K562 (cell line): ENCODE measurements at regions of chr7 and their contacts with region 1.

Region 1: GRCh38 chr7:131859147-131859821 is 302.9 kb upstream of the PODXL start:
- DNase-seq: peak; percentile 72 to 87 (median 84)
- ATAC-seq: peak; percentile 100
- H3K4me3 ChIP-seq: no peak overlapping the region
- H3K27ac ChIP-seq: no peak overlapping the region
- H3K4me1 ChIP-seq: no peaks in the 10 kb centered on the region
- H3K27me3 ChIP-seq: no peaks in the 10 kb centered on the region
- CTCF ChIP-seq: peak; percentile 83 to 95 (median 87)
- EP300 ChIP-seq: no peak
- POLR2A ChIP-seq: no peak
- RAD21 ChIP-seq: peak; percentile 51 to 74; a peak in 3 of 4 replicates

Region 2: DNA sequence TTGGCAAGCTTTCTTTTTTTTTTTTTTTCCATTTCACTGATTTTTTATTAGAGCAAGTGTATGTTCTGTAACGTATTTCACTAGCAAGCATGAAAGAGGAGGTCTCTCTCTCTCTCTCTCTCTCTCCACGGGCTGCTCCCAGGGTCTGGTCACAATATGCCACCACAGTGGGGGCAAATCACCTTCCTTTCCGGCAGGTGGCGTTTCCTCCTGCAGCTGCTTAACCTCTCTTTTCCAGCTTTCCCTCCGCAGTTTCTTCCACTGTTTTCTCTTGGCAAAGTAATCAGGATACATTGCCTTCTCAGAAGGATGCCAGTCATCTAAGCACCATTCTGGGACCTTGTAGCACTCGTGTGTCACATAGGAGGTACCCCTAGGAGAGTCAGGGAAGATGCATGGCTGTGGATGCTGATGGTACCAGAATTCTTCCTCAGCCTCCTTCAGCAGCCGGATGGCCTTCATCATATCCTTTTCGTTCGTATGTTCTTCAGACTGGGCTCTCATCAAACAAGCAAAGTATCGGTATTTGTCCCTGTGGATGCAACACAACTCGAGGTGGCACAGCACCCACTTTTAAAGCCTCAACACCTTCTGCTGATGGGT is 105.6 kb before region 1 on chr7:
- CTCF ChIA-PET with region 1: no interaction called
- POLR2A ChIA-PET with region 1: no interaction called
- in situ Hi-C with region 1: no loop called
- intact Hi-C with region 1: no loop called
- DNase-seq: peak in 2 of 4 experiments; percentile 40 to 51
- ATAC-seq: peak; percentile 93
- H3K4me3 ChIP-seq: no peak overlapping the region
- H3K27ac ChIP-seq: no peak overlapping the region
- H3K4me1 ChIP-seq: no peaks in the 10 kb centered on the region
- H3K27me3 ChIP-seq: peaks cover 0 to 28% of the 10 kb centered on the region in 2 experiments; a peak in 4 of 5 replicates
- CTCF ChIP-seq: peak; percentile 64 to 73 (median 65)
- EP300 ChIP-seq: no peak
- POLR2A ChIP-seq: no peak
- RAD21 ChIP-seq: peak in 1 of 2 experiments; percentile 39; a peak in 2 of 4 replicates

Region 3: GRCh38 chr7:131945313-131945911 is 86.1 kb after region 1 on chr7:
- CTCF ChIA-PET with region 1: no interaction called
- POLR2A ChIA-PET with region 1: no interaction called
- in situ Hi-C with region 1: no loop called
- intact Hi-C with region 1: no loop called
- DNase-seq: peak; percentile 68 to 89 (median 82)
- ATAC-seq: peak; percentile 99
- H3K4me3 ChIP-seq: no peak overlapping the region
- H3K27ac ChIP-seq: no peak overlapping the region
- H3K4me1 ChIP-seq: peaks cover 0 to 7% of the 10 kb centered on the region in 2 experiments; a peak in 1 of 5 replicates
- H3K27me3 ChIP-seq: peaks cover 5 to 43% of the 10 kb centered on the region in 2 experiments; a peak in 4 of 5 replicates
- CTCF ChIP-seq: peak; percentile 89 to 96 (median 90)
- EP300 ChIP-seq: no peak
- POLR2A ChIP-seq: no peak
- RAD21 ChIP-seq: peak; percentile 86 to 89

Region 4: DNA sequence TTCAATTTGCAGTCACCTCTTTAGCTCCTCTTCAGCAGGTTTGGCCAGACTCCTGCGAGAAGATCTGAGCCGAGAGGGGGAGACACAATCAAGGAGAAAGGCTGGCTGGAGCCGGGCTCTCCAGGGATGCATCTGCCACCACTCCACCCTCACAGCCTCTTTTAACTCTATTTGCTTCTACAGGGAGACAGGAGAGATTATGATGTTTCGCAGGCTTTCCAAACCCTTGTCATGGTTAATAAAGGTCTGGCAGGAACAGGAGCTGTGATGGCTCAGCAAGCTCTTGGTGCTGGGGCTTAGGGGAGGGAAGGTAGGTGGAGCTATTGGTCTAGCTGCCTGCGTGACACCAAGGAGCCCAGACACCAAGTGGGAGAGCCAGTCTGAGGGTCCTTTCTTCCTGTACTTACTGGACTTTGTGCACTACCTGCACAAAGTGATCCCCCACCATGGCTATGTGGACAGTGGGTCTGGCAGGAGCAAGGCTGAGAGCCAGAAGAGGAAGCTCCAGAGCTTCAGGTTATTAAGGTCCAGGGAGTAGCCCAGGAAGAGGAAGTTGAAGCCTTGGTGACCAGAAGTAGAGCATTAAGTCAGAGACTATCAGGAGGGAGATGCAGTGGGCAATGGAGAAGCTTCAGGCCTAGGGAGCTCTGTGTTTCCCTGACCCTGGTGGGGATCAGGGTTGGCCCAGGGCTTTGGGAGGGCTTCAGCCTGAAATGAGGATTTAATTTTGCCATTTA is 145.4 kb after region 1 on chr7:
- CTCF ChIA-PET with region 1: no interaction called
- POLR2A ChIA-PET with region 1: no interaction called
- in situ Hi-C with region 1: no loop called
- intact Hi-C with region 1: loop called (anchors 5 kb)
- DNase-seq: peak in 1 of 4 experiments; percentile 5
- ATAC-seq: peak; percentile 61; the same call in 2 of the 3 replicates
- H3K4me3 ChIP-seq: no peak overlapping the region
- H3K27ac ChIP-seq: no peak overlapping the region
- H3K4me1 ChIP-seq: no peaks in the 10 kb centered on the region
- H3K27me3 ChIP-seq: no peaks in the 10 kb centered on the region
- CTCF ChIP-seq: peak in 1 of 3 experiments; percentile 20; a peak in 1 of 6 replicates
- EP300 ChIP-seq: no peak
- POLR2A ChIP-seq: no peak
- RAD21 ChIP-seq: 0 out of 4 replicates have a peak, but pooled peaks of 1 of the 2 experiments have one; percentile 2

Region 5: GRCh38 chr7:132049462-132050304 is 190.4 kb after region 1 on chr7:
- CTCF ChIA-PET with region 1: no interaction called
- POLR2A ChIA-PET with region 1: no interaction called
- in situ Hi-C with region 1: no loop called
- intact Hi-C with region 1: loop called (anchors 10 kb)
- DNase-seq: peak; percentile 50 to 65 (median 60)
- ATAC-seq: peak; percentile 75
- H3K4me3 ChIP-seq: no peak overlapping the region
- H3K27ac ChIP-seq: no peak overlapping the region
- H3K4me1 ChIP-seq: no peaks in the 10 kb centered on the region
- H3K27me3 ChIP-seq: no peaks in the 10 kb centered on the region
- CTCF ChIP-seq: peak; percentile 66 to 86 (median 80)
- EP300 ChIP-seq: no peak
- POLR2A ChIP-seq: no peak
- RAD21 ChIP-seq: peak; percentile 20 to 41; a peak in 2 of 4 replicates

Region 6: GRCh38 chr7:132250883-132251653 is 391.8 kb after region 1 on chr7:
- CTCF ChIA-PET with region 1: no interaction called
- POLR2A ChIA-PET with region 1: no interaction called
- in situ Hi-C with region 1: no loop called
- intact Hi-C with region 1: loop called (anchors 2 kb)
- DNase-seq: no peak
- ATAC-seq: no peak
- H3K4me3 ChIP-seq: no peak overlapping the region
- H3K27ac ChIP-seq: no peak overlapping the region
- H3K4me1 ChIP-seq: no peaks in the 10 kb centered on the region
- H3K27me3 ChIP-seq: peaks cover 2 to 6% of the 10 kb centered on the region in 2 experiments; a peak in 2 of 5 replicates
- CTCF ChIP-seq: no peak
- EP300 ChIP-seq: no peak
- POLR2A ChIP-seq: no peak
- RAD21 ChIP-seq: no peak